ENCODE measurements at regions of chr11 and their contacts with region 1.

Region 1: DNA sequence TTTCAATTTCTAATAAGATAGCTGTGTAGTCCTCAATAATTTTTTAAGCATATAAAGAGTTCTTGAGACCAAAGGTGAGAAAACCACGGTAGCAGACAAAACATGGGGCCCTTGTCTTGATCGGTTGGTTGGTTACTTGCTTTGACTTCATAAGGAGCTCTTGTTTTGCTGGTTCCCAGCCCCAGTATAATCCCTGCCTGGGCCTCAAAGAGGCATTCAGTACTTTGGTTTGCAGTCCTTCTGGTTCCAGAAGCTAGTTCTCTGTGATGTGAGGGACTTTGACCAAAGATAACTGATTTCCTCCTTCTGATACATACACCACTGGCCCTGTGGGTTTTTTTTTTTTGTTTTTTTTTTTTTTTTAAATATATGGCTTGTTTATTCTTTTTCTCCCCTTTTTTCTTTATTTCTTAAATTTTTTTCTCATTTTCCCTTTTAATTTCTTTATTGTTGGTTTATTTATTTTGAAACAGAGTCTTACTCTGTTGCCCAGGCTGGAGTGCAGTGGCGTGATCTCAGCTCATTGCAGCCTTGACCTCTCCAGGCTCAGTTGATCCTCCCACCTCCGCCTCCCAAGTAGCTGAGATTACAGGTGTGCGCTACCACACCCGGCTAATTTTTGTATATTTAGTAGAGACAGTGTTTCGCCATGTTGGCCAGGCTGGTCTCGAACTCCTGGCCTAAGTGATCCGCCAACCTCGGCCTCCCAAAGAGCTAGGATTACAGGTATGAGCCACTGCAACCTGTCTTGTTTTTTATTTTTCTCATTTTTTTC is 17.3 kb downstream of the MARK2 start:
- DNase-seq: no peak
- H3K4me3 ChIP-seq: no peak overlapping the region
- H3K27me3 ChIP-seq: no peaks in the 10 kb centered on the region
- CTCF ChIP-seq: no peak

Region 2: DNA sequence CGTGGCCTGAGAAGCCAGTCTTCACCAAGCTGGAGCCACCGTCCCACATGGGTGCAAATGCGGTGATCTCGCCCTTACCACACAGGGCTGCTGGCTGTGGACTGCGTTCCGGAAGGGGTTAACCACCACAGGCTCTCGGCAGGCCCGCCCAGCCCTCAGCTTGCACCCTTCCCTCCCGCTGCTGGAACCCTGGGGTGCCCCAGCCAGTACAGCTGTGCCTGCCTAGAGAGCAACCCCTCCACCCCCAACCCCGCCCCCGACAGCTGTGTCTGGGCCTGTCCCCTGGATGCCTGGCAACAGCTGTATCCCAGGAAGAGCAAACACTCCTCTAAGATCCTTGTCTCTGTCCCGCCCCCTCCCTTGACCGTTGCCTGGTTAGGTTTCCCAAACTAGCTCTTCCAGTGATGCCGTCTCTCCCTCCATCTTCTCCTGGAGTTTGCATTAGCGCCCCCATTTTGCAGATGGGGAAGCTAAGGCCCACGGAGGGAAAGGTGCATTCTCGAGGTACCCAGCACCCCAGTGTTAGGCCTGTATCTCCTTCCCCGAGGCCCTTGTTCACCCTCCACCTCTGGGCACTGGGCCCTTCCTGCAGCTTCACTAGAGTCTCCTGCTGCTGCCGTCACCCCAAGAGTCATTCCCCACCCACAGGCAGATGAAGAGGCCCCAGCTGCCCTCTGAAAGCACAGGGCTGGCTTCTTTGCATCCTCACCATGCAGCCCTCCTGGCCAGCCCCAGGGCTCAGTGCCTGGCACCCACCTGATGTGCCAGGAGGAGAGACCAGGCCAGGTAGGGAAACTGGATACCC is 105.6 kb after region 1 on chr11:
- CTCF ChIA-PET with region 1: no interaction called
- POLR2A ChIA-PET with region 1: interaction called, 14 read pairs
- DNase-seq: no peak
- H3K4me3 ChIP-seq: no peak overlapping the region
- H3K27me3 ChIP-seq: no peaks in the 10 kb centered on the region
- CTCF ChIP-seq: no peak

Region 3: DNA sequence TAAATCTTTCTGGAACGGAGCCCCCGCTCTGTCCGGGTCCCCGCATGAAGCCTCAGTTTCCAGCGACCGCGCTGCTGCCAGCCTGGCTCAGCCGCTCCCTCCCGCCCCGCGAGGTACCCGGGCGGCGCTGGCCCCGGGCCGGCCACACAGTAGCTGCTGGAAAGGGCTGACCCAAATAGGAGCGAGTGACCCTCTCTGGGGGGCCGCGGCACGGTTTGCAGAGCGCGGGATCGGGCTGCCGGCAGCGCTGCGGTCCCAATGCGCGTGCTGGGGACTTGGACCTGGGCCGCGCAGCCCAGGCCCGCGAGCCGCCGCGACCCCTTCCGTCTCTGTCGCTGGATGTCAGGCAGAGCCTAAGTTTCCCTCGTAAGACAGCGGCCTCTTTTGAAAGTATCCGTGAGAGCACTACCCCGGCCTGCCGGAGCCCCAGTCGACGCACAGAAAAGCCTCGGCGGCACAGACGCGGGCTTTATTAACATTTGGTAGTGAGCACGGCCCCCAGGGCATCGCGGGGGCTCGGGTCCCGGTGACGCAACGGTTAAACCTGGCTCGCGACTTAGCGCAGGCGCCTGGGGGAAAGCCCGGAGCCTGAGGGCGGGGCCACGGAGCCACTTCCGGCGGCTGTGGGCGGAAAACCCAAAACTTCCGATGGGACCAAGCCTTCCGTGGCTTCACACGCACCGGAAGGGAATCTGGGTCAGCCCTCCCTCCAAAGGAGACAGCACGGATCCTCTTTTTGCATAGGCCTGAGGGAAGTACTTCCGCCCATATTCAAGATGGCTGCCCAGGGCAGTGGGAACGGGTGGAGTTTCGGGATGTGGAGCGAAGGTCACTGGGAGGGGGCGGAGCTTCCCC is 413.4 kb after region 1 on chr11:
- CTCF ChIA-PET with region 1: no interaction called
- POLR2A ChIA-PET with region 1: no interaction called
- DNase-seq: peak; percentile 99
- H3K4me3 ChIP-seq: peak overlapping the region; percentile 66
- H3K27me3 ChIP-seq: no peaks in the 10 kb centered on the region
- CTCF ChIP-seq: no peak